ENCODE measurements at regions of chr11 and their contacts with region 1.

Region 1: GRCh38 chr11:74948898-74949747 is at the starts of genes SPCS2 and XRRA1:
- DNase-seq: peak; percentile 95 to 99 (median 97)
- ATAC-seq: peak; percentile 95
- H3K4me3 ChIP-seq: peak within 1 kb of the TSS; percentile 86 to 90
- H3K4me3 Mint-ChIP-seq: peak within 1 kb of the TSS; percentile 92
- H3K27ac ChIP-seq: peak within 1 kb of the TSS; percentile 80 to 88
- H3K27ac Mint-ChIP-seq: peak within 1 kb of the TSS; percentile 95
- H3K4me1 ChIP-seq: peaks cover 31% of the 10 kb centered on the region
- H3K4me1 Mint-ChIP-seq: peaks cover 63% of the 10 kb centered on the region
- H3K27me3 ChIP-seq: no peaks in the 10 kb centered on the region
- H3K27me3 Mint-ChIP-seq: no peaks in the 10 kb centered on the region
- CTCF ChIP-seq: no peak
- total RNA-seq, gene SPCS2: 38.1 to 42.3 TPM
- total RNA-seq, gene XRRA1: 19.2 to 20.9 TPM

Region 2: DNA sequence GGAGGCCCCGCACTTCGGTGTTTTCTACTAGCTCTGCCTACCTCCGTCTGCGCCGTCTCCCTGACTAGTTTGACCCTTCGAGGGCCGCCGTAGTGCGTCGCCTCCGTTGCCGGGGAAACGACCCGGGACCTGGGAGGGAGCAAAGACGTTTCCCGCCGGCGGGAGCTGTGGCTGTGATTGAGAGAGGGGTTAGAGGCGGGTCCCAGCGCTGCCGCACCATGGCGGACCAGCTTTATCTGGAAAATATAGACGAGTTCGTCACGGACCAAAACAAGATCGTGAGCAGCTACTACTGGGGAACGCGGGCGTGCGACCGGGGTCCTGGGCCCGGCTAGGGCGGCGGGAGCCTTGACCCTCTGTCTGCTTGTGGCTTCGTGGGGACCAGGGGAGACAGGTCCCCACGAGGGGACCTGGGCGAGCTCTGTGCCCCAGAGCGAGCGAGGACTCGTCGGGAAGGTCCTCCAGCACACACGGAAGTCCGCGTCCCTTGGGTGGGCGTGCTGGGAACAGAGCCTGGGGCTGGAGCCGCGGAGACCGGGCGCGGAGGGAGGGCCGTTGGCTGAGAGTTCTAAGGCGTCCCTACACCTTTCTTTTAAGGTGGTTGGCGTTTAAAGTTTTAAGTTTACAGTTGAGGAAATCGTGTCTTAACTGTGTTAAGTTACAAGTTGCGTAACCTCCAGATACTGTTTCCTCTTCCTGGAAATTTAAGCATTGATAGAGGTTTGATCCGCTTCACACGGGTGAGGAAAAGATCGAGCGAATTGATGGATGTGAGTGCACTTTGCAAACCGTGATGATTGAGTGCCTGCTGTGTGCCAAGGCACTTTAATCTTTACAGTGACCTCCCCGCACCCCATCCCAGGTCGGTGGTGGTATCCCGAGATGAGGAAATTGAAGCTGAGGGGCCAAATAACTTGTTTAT is 356.4 kb before region 1 on chr11 and contains the start of gene POLD3:
- CTCF ChIA-PET with region 1: no interaction called
- POLR2A ChIA-PET with region 1: no interaction called
- intact Hi-C with region 1: loop called (anchors 1 to 2 kb)
- DNase-seq: peak; percentile 88 to 96 (median 92)
- ATAC-seq: peak; percentile 94
- H3K4me3 ChIP-seq: peak within 1 kb of the TSS; percentile 88 to 100
- H3K4me3 Mint-ChIP-seq: peak within 1 kb of the TSS; percentile 99
- H3K27ac ChIP-seq: peak within 1 kb of the TSS; percentile 82 to 91
- H3K27ac Mint-ChIP-seq: peak within 1 kb of the TSS; percentile 97
- H3K4me1 ChIP-seq: peaks cover 11% of the 10 kb centered on the region
- H3K4me1 Mint-ChIP-seq: peaks cover 19% of the 10 kb centered on the region
- H3K27me3 ChIP-seq: no peaks in the 10 kb centered on the region
- H3K27me3 Mint-ChIP-seq: no peaks in the 10 kb centered on the region
- CTCF ChIP-seq: no peak
- total RNA-seq, gene POLD3: 4.0 TPM

Region 3: GRCh38 chr11:74988541-74989260 is 39.6 kb after region 1 on chr11 and contains the start of gene NEU3:
- CTCF ChIA-PET with region 1: no interaction called
- POLR2A ChIA-PET with region 1: interaction called, 10 read pairs
- intact Hi-C with region 1: loop called (anchors 1 kb)
- DNase-seq: peak; percentile 68 to 91 (median 84)
- ATAC-seq: peak; percentile 97
- H3K4me3 ChIP-seq: peak within 1 kb of the TSS; percentile 84 to 86
- H3K4me3 Mint-ChIP-seq: peak within 1 kb of the TSS; percentile 94
- H3K27ac ChIP-seq: peak within 1 kb of the TSS; percentile 74
- H3K27ac Mint-ChIP-seq: peak within 1 kb of the TSS; percentile 81
- H3K4me1 ChIP-seq: peaks cover 18% of the 10 kb centered on the region
- H3K4me1 Mint-ChIP-seq: peaks cover 32% of the 10 kb centered on the region
- H3K27me3 ChIP-seq: no peaks in the 10 kb centered on the region
- H3K27me3 Mint-ChIP-seq: no peaks in the 10 kb centered on the region
- CTCF ChIP-seq: no peak
- total RNA-seq, gene NEU3: 9.6 to 10.7 TPM

Region 4: DNA sequence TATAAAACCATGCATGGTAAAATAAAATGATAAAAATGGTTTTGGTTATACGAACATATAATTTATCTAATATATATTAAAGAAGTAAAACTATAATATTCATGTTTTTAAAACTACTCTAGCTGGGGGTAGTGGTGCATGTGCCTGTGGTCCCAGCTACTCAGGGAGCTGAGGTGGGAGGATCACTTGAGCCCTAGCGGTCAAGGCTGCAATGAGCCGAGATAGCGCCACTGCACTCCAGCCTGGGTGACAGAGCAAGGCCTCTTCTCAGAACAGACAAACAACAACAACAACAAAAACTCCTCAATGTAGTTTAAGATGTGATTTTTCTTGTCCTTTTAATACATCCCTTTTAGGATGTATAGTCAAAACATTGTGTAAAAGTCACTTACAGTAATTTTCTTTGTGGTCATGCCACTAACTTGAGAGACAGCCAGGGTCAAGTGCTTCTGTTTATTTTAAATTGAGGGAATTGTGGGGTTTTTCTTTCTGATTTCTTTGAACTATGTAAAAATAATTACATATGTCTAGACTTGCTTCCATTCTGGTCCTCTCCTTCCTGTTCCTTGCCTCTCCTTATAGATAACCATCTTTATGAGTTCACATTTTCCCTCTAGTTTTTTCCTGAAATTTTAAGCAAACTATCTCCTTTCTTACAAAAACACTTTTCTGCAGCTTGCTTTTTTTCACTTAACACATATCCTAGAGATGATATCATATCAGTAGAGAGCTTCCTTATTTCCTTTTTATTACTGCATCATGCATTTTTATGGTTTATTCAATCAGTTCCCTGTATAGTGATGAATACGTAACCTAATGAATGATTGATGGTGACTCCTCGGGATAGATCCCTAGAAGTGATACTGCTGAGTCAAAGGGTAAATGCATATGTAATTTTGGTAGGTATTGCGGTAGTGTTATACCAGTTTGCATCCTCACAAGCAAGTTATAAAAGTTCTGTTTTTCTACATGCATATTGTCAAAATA is 138.5 kb after region 1 on chr11:
- CTCF ChIA-PET with region 1: no interaction called
- POLR2A ChIA-PET with region 1: no interaction called
- intact Hi-C with region 1: no loop called
- DNase-seq: no peak
- ATAC-seq: no peak
- H3K4me3 ChIP-seq: no peak overlapping the region
- H3K4me3 Mint-ChIP-seq: no peak overlapping the region
- H3K27ac ChIP-seq: no peak overlapping the region
- H3K27ac Mint-ChIP-seq: no peak overlapping the region
- H3K4me1 ChIP-seq: no peaks in the 10 kb centered on the region
- H3K4me1 Mint-ChIP-seq: no peaks in the 10 kb centered on the region
- H3K27me3 ChIP-seq: no peaks in the 10 kb centered on the region
- H3K27me3 Mint-ChIP-seq: peaks cover 25% of the 10 kb centered on the region
- CTCF ChIP-seq: no peak

Region 5: GRCh38 chr11:75241036-75241905 is 292.1 kb after region 1 on chr11:
- CTCF ChIA-PET with region 1: no interaction called
- POLR2A ChIA-PET with region 1: no interaction called
- intact Hi-C with region 1: loop called in 1 of 2 experiments (anchors 5 kb)
- DNase-seq: peak; percentile 77 to 91 (median 83)
- ATAC-seq: peak; percentile 93
- H3K4me3 ChIP-seq: peak overlapping the region; percentile 31 to 61
- H3K4me3 Mint-ChIP-seq: peak overlapping the region; percentile 79
- H3K27ac ChIP-seq: no peak overlapping the region
- H3K27ac Mint-ChIP-seq: no peak overlapping the region
- H3K4me1 ChIP-seq: peaks cover 9% of the 10 kb centered on the region
- H3K4me1 Mint-ChIP-seq: peaks cover 10% of the 10 kb centered on the region
- H3K27me3 ChIP-seq: peaks cover 17 to 20% of the 10 kb centered on the region in 2 experiments
- H3K27me3 Mint-ChIP-seq: peaks cover 49% of the 10 kb centered on the region
- CTCF ChIP-seq: peak; percentile 77

Region 6: GRCh38 chr11:75399344-75400145 is 450.4 kb after region 1 on chr11 and contains the start of gene RPS3:
- CTCF ChIA-PET with region 1: no interaction called
- POLR2A ChIA-PET with region 1: no interaction called
- intact Hi-C with region 1: loop called in 1 of 2 experiments (anchors 5 kb)
- DNase-seq: peak; percentile 72 to 93 (median 88)
- ATAC-seq: peak; percentile 88
- H3K4me3 ChIP-seq: peak within 1 kb of the TSS; percentile 69 to 76
- H3K4me3 Mint-ChIP-seq: peak within 1 kb of the TSS; percentile 95
- H3K27ac ChIP-seq: peak within 1 kb of the TSS; percentile 88 to 89
- H3K27ac Mint-ChIP-seq: peak within 1 kb of the TSS; percentile 95
- H3K4me1 ChIP-seq: peaks cover 28% of the 10 kb centered on the region
- H3K4me1 Mint-ChIP-seq: peaks cover 48% of the 10 kb centered on the region
- H3K27me3 ChIP-seq: no peaks in the 10 kb centered on the region
- H3K27me3 Mint-ChIP-seq: no peaks in the 10 kb centered on the region
- CTCF ChIP-seq: no peak
- total RNA-seq, gene RPS3: 4,683 to 5,039 TPM